Aorta (tissue), 5 donors: ENCODE measurements at regions of chr5 and their contacts with region 1.

Region 1: GRCh38 chr5:57450991-57451876 is 31.4 kb downstream of the ACTBL2 start:
- DNase-seq: no peak
- ATAC-seq: no peak
- H3K4me3 ChIP-seq: no peak overlapping the region
- H3K27ac ChIP-seq: peak overlapping the region; percentile 43 to 71
- H3K4me1 ChIP-seq: peaks cover 8 to 13% of the 10 kb centered on the region in 2 donors
- H3K27me3 ChIP-seq: no peaks in the 10 kb centered on the region

Region 2: GRCh38 chr5:57408714-57409113 is 42.5 kb before region 1 on chr5:
- intact Hi-C with region 1: loop called in 1 of 2 experiments (anchors 5 kb)
- DNase-seq: no peak
- ATAC-seq: peak; percentile 56
- H3K4me3 ChIP-seq: no peak overlapping the region
- H3K27ac ChIP-seq: peak overlapping the region in 1 of 2 donors; percentile 98
- H3K4me1 ChIP-seq: peaks cover 16 to 24% of the 10 kb centered on the region in 2 donors
- H3K27me3 ChIP-seq: no peaks in the 10 kb centered on the region

Region 3: DNA sequence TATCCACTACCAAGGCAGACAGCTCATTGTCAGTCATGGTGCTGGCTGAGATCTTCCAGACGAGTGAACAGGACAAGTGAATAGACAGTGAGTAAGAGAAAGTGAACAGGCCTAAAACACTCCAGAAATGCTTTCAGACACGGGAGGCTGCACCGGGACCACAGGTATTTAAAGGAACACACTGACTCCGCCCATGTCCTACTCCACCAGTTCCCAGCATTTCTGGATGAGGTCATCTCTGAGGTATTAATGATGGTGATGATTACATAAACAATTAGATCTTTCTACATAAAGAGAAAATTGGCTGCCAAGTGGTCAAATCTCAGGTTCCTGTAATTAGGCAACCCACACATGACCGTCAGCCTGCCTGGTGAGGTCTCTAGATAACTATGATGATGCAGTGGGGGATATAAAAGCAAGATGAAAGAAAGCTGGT is 31.5 kb after region 1 on chr5 and contains the start of gene ACTBL2:
- intact Hi-C with region 1: no loop called
- DNase-seq: no peak
- ATAC-seq: no peak
- H3K4me3 ChIP-seq: no peak within 1 kb of the TSS
- H3K27ac ChIP-seq: no peak within 1 kb of the TSS
- H3K4me1 ChIP-seq: no peaks in the 10 kb centered on the region
- H3K27me3 ChIP-seq: no peaks in the 10 kb centered on the region
- total RNA-seq, gene ACTBL2: not detected

Region 4: GRCh38 chr5:57494104-57495098 is 43.2 kb after region 1 on chr5:
- intact Hi-C with region 1: loop called in 1 of 2 experiments (anchors 5 kb)
- DNase-seq: peak; percentile 83 to 89
- ATAC-seq: peak; percentile 57
- H3K4me3 ChIP-seq: no peak overlapping the region
- H3K27ac ChIP-seq: peak overlapping the region in 1 of 2 donors; percentile 56
- H3K4me1 ChIP-seq: peaks cover 2 to 10% of the 10 kb centered on the region in 2 donors
- H3K27me3 ChIP-seq: no peaks in the 10 kb centered on the region